ENCODE measurements at regions of chr18 and their contacts with region 1.

Region 1: GRCh38 chr18:9913526-9914333 is at the start of gene VAPA:
- DNase-seq: peak; percentile 94
- ATAC-seq: peak; percentile 81
- H3K4me3 Mint-ChIP-seq: peak within 1 kb of the TSS; percentile 93
- H3K27ac Mint-ChIP-seq: peak within 1 kb of the TSS; percentile 93
- H3K4me1 Mint-ChIP-seq: peaks cover 28% of the 10 kb centered on the region
- H3K27me3 Mint-ChIP-seq: peaks cover 6% of the 10 kb centered on the region
- CTCF ChIP-seq: no peak
- total RNA-seq, gene VAPA: 114 and 124 TPM in 2 replicates

Region 2: DNA sequence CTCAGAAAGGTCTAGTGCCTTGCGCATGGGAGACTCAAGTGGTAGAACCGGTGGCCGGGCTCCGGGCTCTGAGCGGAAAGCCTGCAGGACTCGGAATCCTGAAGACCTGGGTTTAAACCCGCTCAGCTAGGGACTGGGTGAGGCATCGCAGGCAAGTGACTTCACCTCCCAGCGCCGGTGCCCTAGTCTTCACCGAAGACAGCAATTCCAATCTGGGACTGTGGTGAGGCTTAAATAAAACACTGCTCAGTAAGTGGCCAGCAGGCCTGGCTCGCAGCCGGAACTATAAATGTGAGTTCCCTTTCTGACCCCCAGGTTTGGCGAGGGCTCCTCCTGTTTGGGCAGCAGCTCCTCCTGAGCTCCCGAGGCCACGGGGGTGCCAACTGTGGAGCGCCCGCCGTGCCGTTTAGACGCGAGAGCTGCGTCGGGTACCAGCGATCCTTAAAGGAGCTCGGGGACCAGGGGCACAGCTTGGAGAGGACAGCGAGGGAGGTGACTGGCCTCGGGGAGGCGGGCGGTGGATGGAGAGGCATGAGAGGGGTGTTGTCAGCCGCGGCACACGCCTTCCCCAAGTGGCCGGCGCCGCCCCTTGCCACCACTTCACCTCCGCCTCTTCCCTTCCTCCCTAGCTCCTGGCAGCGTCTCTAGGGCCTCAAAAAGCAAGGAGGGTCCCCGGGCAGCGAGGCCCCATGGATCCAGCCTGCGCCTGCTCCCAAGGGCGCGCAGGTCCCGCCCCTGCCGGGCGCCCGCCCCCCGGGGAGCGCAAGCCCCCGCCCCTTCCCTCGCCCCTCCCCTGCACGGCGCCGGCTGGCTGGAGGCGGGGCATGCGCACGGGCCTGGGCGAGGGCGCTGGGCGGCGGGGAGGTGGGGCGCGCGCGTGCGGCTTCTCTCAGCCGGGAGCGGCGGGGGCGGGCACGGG is 1209.1 kb before region 1 on chr18:
- CTCF ChIA-PET with region 1: no interaction called
- POLR2A ChIA-PET with region 1: no interaction called
- intact Hi-C with region 1: loop called (anchors 2 kb)
- DNase-seq: peak; percentile 89
- ATAC-seq: peak; percentile 92
- H3K4me3 Mint-ChIP-seq: peak overlapping the region; percentile 89
- H3K27ac Mint-ChIP-seq: peak overlapping the region; percentile 41
- H3K4me1 Mint-ChIP-seq: peaks cover 26% of the 10 kb centered on the region
- H3K27me3 Mint-ChIP-seq: peaks cover 14% of the 10 kb centered on the region
- CTCF ChIP-seq: no peak

Region 3: GRCh38 chr18:9334329-9334972 is 579.3 kb before region 1 on chr18 and contains the start of gene TWSG1:
- CTCF ChIA-PET with region 1: no interaction called
- POLR2A ChIA-PET with region 1: interaction called, 7 read pairs
- intact Hi-C with region 1: loop called (anchors 1 kb)
- DNase-seq: peak; percentile 86
- ATAC-seq: peak; percentile 94
- H3K4me3 Mint-ChIP-seq: peak within 1 kb of the TSS; percentile 89
- H3K27ac Mint-ChIP-seq: peak within 1 kb of the TSS; percentile 60
- H3K4me1 Mint-ChIP-seq: peaks cover 20% of the 10 kb centered on the region
- H3K27me3 Mint-ChIP-seq: no peaks in the 10 kb centered on the region
- CTCF ChIP-seq: no peak
- total RNA-seq, gene TWSG1: 4.1 and 4.8 TPM in 2 replicates

Region 4: GRCh38 chr18:9673296-9674251 is 240.2 kb before region 1 on chr18:
- CTCF ChIA-PET with region 1: no interaction called
- POLR2A ChIA-PET with region 1: interaction called, 5 read pairs
- intact Hi-C with region 1: loop called (anchors 1 kb)
- DNase-seq: peak; percentile 25
- ATAC-seq: peak; percentile 95
- H3K4me3 Mint-ChIP-seq: peak overlapping the region; percentile 35
- H3K27ac Mint-ChIP-seq: peak overlapping the region; percentile 93
- H3K4me1 Mint-ChIP-seq: peaks cover 15% of the 10 kb centered on the region
- H3K27me3 Mint-ChIP-seq: no peaks in the 10 kb centered on the region
- CTCF ChIP-seq: no peak

Region 5: DNA sequence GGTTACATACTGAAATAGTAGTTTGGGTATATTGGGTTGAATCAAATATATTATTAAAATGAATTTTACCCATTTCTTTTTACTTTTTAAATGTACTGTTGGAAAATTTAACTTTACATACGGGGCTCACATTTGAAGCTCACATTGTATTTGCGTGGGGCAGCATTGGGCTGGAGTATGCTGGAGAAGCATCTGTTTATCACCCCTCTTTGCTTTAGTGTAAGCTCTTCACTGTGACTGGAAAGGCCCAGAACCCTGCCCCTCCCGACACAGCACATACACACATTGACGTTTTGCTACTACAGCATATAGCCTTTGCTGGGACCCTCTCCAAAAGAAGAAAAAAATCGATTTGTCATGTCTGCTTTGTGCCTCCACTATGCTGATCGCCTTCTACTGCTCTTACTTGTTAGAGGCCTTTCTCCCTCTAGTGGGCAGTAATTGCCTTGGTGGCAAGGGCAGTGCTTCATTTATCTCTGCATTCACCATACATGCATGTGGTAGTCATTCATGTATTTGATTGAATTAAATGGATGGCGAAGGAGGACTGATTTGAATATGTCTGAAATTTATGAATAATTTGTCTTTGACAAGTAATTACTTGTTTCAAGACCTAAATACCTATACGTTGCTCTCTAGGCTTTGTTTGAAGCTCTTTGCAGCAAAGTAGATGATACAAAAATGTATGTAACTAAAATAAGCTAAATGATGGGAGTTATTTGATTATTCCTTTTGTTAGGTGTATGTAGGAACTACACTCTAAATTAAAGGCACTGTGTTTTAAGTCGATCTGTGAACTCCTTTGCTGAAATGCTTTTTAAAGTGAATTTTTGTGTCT is 37.5 kb after region 1 on chr18:
- CTCF ChIA-PET with region 1: no interaction called
- POLR2A ChIA-PET with region 1: no interaction called
- intact Hi-C with region 1: loop called (anchors 5 kb)
- DNase-seq: no peak
- ATAC-seq: peak; percentile 47
- H3K4me3 Mint-ChIP-seq: no peak overlapping the region
- H3K27ac Mint-ChIP-seq: no peak overlapping the region
- H3K4me1 Mint-ChIP-seq: peaks cover 12% of the 10 kb centered on the region
- H3K27me3 Mint-ChIP-seq: no peaks in the 10 kb centered on the region
- CTCF ChIP-seq: no peak

Measured in activated B cell treated with CpG ODN at 0.5 μM for 24 hours (primary cell).